Panc1 (cell line): ENCODE measurements at regions of chr17 and their contacts with region 1.

Region 1: DNA sequence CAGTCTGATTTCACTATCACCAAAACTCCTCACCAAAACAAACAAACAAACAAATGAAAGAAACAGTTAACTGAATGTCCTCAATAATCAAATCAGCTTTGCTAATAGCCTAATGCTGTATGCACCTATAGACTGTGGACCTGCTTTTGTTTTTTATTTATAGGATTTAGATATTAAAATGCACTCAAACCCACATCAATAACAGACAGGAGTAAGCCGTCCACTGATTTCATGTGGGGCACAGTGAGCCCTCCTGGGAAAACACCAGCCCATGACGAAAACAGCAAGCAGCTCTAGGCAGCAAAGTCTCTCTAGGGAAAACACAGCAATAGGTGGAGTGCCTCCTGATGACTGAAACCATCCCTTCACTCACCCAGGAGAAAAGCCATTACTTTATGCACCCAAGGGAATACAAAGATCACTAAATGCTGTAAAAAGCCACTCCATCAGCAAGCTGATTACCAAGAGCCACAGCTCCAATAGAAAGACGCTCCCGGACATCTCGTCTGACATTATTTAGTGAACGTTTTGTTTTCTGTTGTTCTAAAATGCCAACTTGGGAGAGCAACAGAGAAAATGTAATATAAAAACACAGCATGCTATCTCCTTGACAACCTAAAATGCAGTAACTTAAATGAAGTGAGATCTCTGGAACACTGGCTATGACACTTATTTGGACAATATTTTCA is 47.8 kb downstream of the ANKFY1 start:
- DNase-seq: no peak
- ATAC-seq: peak; percentile 30; the same call in 1 of the 2 replicates
- H3K4me3 ChIP-seq: no peak overlapping the region
- H3K27ac ChIP-seq: no peak overlapping the region
- H3K4me1 ChIP-seq: no peaks in the 10 kb centered on the region
- H3K27me3 ChIP-seq: no peaks in the 10 kb centered on the region
- CTCF ChIP-seq: no peak

Region 2: DNA sequence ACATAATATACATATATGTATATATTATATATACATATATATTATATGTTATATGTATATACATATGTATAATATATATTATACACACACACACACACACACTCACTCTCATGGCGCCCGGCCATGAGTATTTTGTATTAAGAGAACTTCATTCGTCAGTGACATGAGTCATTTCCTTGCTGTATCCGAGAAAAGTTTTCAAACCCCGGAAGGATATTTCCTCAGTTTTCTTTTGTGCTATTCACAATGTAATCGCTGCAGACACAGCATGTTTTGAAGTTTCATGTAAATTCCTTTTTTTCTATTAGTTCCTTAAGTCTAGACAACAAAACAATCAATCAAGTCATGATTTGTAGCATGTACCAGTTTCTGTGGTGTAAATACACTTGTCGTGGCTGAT is 1185.9 kb before region 1 on chr17:
- CTCF ChIA-PET with region 1: no interaction called
- POLR2A ChIA-PET with region 1: interaction called, 14 read pairs
- in situ Hi-C with region 1: no loop called
- intact Hi-C with region 1: no loop called
- DNase-seq: peak; percentile 35
- ATAC-seq: no peak
- H3K4me3 ChIP-seq: no peak overlapping the region
- H3K27ac ChIP-seq: no peak overlapping the region
- H3K4me1 ChIP-seq: no peaks in the 10 kb centered on the region
- H3K27me3 ChIP-seq: no peaks in the 10 kb centered on the region
- CTCF ChIP-seq: no peak

Region 3: DNA sequence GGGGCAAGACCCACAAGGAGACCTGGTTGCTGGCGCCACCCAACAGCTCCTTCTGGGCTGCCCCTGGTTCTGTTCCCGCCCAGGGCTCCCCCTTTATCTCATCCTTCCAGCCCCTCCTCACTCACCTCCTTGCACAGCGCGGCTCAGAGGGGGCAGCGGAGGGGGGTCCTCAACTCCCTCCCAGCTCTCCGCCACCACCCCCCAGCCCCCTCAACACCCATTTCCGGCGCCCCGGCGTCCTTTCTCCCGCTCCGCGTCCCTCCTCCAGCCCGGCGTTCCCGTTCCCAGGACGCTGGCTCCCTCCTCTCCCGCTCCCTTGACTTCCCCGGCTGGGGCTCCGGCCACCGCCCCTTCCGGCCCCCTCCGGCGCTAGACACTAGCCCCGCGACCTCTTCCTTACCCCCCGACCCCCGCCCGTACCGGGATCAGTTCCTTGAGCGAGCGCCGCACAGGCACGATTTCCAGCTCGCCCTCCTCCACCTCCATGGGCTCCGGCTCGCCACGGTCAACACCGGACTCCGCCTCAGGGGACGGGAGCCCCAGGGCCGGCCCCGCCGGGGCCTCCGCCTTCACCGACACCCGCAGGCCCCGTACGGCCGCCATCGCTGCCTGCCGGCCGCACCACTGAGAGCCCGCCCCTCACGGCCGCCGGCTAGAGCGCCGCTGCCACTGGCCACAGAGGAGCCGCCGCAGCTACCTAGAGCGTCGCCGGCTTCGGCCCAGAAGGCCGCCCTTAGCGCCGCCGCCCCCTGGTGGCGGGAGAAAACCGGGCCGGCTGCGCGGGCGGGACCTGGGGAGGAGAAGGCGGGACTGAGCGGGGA is 370.2 kb before region 1 on chr17 and contains the start of gene NCBP3:
- CTCF ChIA-PET with region 1: no interaction called
- POLR2A ChIA-PET with region 1: no interaction called
- in situ Hi-C with region 1: no loop called
- intact Hi-C with region 1: no loop called
- DNase-seq: peak; percentile 43
- ATAC-seq: peak; percentile 99
- H3K4me3 ChIP-seq: peak within 1 kb of the TSS; percentile 69 to 73
- H3K27ac ChIP-seq: peak within 1 kb of the TSS; percentile 70
- H3K4me1 ChIP-seq: peaks cover 8% of the 10 kb centered on the region
- H3K27me3 ChIP-seq: no peaks in the 10 kb centered on the region
- CTCF ChIP-seq: peak; percentile 98
- total RNA-seq, gene NCBP3: 28.1 TPM

Region 4: GRCh38 chr17:4234401-4234800 is 18.4 kb after region 1 on chr17:
- CTCF ChIA-PET with region 1: interaction called, 11 read pairs
- POLR2A ChIA-PET with region 1: interaction called, 3 read pairs
- in situ Hi-C with region 1: no loop called
- intact Hi-C with region 1: no loop called
- DNase-seq: no peak
- ATAC-seq: no peak
- H3K4me3 ChIP-seq: no peak overlapping the region
- H3K27ac ChIP-seq: no peak overlapping the region
- H3K4me1 ChIP-seq: peaks cover 11% of the 10 kb centered on the region; the same call in 1 of the 2 replicates
- H3K27me3 ChIP-seq: no peaks in the 10 kb centered on the region
- CTCF ChIP-seq: no peak

Region 5: DNA sequence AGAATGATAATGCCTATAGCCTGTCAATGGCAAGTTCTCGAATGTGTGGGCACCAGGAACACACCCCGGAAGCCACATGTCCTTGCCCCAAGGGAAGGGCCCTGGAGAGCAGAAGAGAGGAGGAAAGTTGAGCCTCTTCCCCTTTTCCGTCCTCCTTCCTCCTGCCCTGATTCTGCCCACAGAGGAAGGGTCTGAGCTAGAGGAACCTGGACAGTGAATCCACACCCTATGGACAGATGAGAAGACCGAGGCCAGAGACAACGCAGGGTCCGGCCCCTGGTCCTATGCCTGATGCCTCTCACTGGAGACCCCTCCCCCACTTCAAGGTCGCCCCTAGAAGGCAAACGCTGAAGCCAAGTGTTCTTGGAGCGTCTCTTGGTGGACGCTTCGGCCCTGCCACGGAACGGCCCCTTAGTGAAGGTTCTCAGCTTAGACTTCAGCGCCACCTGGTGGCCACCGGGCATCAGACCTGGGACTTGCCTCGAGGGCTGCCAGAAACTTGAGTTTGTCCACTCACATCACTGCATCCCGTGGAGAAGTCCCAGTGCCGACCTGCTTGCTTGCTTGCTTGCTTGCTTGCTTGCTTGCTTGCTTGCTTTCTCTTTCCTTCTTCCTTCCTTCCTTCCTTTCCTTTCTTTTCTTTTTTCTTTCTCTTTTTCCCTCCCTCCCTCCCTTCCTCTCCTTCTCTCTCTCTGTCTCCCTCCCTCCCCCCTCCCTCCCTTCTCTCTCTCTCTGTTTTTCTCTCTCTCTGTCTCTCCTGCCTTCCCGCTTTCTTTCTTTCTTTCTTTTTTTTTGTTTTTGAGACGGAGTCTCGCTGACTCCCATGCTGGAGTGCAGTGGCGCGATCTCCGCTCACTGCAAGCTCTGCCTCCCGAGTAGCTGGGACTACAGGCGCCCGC is 197.2 kb after region 1 on chr17:
- CTCF ChIA-PET with region 1: no interaction called
- POLR2A ChIA-PET with region 1: no interaction called
- in situ Hi-C with region 1: no loop called
- intact Hi-C with region 1: loop called (anchors 1 kb)
- DNase-seq: peak; percentile 66
- ATAC-seq: peak; percentile 99
- H3K4me3 ChIP-seq: peak overlapping the region in 1 of 2 experiments; percentile 16; a peak in 1 of 4 replicates
- H3K27ac ChIP-seq: no peak overlapping the region
- H3K4me1 ChIP-seq: no peaks in the 10 kb centered on the region
- H3K27me3 ChIP-seq: no peaks in the 10 kb centered on the region
- CTCF ChIP-seq: peak; percentile 91

Region 6: GRCh38 chr17:4573669-4574068 is 357.6 kb after region 1 on chr17:
- CTCF ChIA-PET with region 1: no interaction called
- POLR2A ChIA-PET with region 1: no interaction called
- in situ Hi-C with region 1: no loop called
- intact Hi-C with region 1: no loop called
- DNase-seq: no peak
- ATAC-seq: peak; percentile 51
- H3K4me3 ChIP-seq: no peak overlapping the region
- H3K27ac ChIP-seq: no peak overlapping the region
- H3K4me1 ChIP-seq: no peaks in the 10 kb centered on the region; the same call in 1 of the 2 replicates
- H3K27me3 ChIP-seq: no peaks in the 10 kb centered on the region
- CTCF ChIP-seq: no peak